Activated T-helper 2 cell treated with anti-CD3 and anti-CD28 coated beads, Interferon-gamma antibody, Interleukin-2, Interleukin-4, amounts not matched to agents 10 μg/mL and 5 μg/mL and 100 μg/mL, durations not matched to agents 14 hours and 24 hours and 36 hours (primary cell): ENCODE measurements at regions of chr5 and their contacts with region 1.

Region 1: DNA sequence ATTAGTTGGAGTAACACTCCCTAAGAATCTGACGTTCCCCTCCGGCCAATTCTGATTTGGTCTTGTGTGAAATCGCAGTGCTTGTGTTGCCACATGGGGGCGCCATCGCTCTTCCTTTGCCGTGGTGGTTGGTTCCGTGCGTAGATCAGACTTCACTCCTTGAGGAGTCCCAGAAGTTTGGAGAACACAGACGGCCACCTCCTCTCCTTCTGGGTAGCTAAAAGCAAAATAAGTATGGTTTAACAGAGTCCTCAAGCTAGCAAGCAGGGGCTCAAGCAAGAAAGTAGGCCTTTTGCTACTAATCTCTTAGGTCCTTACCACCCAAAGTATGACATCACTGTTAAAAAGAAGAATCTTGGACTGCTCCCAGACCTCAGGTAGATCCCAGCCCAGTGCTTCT is 59.5 kb downstream of the HSPA4 start:
- DNase-seq: peak; percentile 64
- H3K4me3 Mint-ChIP-seq: no peak overlapping the region
- H3K27ac Mint-ChIP-seq: no peak overlapping the region
- H3K4me1 Mint-ChIP-seq: peaks cover 26% of the 10 kb centered on the region
- H3K27me3 Mint-ChIP-seq: peaks cover 2% of the 10 kb centered on the region

Region 2: DNA sequence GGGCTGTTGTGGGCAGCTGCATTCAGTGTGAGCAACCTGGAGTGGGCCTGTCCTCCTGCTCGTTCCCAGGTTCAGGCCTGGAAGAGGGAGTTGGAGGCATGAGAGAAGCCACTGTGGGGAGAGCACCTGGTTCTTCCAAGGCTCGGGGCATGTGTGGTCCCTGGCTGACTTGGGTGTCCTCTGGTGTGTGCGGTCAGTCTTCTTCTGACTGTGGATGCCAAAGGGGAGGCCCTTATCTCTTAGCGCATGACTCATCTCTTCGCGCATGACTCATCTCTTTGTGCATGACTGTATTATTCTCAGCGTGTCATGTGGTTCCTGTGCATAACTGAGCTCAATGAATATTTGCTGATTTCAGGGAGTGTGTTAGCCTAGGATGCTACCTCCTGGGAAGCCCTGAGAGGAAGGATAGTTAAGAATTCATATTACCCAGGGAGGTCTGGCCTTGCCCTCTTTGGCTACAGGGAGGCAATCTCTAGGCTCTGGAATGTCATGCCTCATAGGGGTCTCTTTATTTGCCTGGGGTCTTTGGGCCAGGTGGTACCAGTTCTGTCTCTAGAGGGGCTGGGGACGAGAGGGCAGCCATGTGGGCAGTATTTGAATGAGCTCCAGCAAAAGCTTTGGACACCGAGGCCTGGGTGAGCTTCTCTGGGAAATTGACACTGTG is 129.3 kb after region 1 on chr5:
- intact Hi-C with region 1: loop called (anchors 2 kb)
- DNase-seq: no peak
- H3K4me3 Mint-ChIP-seq: no peak overlapping the region
- H3K27ac Mint-ChIP-seq: no peak overlapping the region
- H3K4me1 Mint-ChIP-seq: peaks cover 21% of the 10 kb centered on the region
- H3K27me3 Mint-ChIP-seq: peaks cover 1% of the 10 kb centered on the region

Region 3: DNA sequence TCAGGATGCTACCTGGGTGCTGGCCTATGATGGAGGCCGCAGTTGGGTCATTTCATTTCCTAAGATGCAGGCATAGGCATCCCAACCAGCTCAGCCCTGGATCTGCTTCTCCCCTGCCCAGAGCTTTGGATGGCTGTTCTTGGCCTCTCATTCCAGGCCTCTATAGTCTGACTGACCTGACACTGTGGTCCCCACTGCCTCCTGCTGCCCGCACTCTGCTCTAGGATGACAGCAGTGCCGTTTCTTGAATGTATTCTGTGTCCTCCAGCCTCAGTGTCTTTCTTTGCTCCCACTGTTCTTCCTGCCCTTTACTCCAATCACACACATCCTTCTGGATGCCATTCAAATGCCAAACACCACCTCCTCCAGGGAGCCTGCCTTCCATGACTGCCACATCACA is 176.2 kb after region 1 on chr5:
- intact Hi-C with region 1: loop called (anchors 1 kb)
- DNase-seq: peak; percentile 12
- H3K4me3 Mint-ChIP-seq: no peak overlapping the region
- H3K27ac Mint-ChIP-seq: no peak overlapping the region
- H3K4me1 Mint-ChIP-seq: no peaks in the 10 kb centered on the region
- H3K27me3 Mint-ChIP-seq: no peaks in the 10 kb centered on the region

Region 4: DNA sequence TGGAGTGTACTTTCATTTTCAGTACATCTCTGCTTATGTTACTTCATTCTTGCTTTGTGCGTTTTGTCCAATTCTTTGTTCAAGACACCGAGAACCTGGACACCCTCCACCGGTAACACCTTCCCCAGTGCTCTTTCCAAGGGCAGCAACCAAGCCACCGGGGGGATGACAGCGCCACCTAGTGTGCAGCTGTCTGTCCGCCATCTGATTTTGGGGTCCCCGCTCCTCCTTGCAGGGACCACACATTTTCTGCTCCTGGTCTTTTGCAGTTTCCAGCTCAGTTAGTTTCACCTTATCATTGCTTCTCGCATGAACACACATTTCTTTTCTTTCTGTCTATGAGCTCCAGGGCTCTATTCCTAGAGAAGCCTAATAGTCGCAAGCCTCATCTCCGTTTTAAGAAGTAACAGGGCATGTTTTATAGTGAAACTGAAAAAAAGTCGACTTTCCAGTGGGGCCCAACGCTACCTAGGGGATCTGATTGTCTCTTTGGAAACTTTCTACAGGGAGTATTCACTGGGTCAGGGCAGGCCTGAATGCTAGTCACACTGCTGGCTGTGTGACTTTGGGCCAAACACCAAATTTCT is 349.0 kb after region 1 on chr5:
- intact Hi-C with region 1: loop called (anchors 1 kb)
- DNase-seq: no peak
- H3K4me3 Mint-ChIP-seq: no peak overlapping the region
- H3K27ac Mint-ChIP-seq: peak overlapping the region; percentile 33
- H3K4me1 Mint-ChIP-seq: peaks cover 29% of the 10 kb centered on the region
- H3K27me3 Mint-ChIP-seq: peaks cover 12% of the 10 kb centered on the region

Region 5: DNA sequence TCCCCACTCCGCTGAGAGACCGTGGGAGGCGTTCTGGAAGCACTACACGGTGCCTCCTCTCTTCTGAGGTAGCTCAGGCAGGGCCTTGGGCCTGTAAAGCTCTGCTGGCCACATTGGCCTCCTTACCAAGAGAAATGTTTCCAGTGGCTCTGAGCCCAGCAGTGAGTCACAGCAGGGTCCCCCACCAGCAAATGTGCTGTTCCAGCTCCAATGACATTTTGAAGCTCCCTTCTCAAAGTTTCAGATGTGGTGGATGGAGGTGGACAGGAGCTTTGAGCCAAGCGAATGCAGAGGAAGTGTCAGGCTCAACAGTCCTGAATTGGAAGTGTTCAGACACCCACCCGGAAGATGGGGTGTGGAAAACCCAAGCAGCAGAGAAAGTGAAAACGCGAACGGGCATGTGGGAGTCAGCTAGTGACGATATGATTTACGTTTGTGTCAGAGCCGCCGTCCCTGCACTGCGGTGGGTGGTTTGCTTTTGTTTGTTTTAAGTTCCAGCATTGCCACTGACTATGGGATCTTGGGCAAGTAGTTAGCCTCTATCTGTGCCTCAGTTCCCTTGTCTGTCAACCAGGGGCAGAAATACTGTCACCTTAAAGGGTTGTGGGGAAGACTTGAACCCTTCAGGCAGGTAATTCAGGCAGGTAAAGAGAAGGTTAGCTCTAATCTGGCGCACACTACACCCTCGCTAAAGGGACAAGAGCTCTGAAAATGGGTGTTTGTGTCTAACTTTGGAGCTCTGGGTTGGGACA is 818.9 kb after region 1 on chr5:
- intact Hi-C with region 1: loop called (anchors 5 kb)
- DNase-seq: peak; percentile 39
- H3K4me3 Mint-ChIP-seq: peak overlapping the region; percentile 54
- H3K27ac Mint-ChIP-seq: peak overlapping the region; percentile 97
- H3K4me1 Mint-ChIP-seq: peaks cover 55% of the 10 kb centered on the region
- H3K27me3 Mint-ChIP-seq: no peaks in the 10 kb centered on the region